Gastrocnemius medialis (tissue), 4 donors: ENCODE measurements at regions of chr1 and their contacts with region 1.

Region 1: GRCh38 chr1:197902454-197903195 is at the start of gene C1orf53:
- DNase-seq: peak; percentile 65 to 81
- ATAC-seq: peak; percentile 96
- H3K4me3 ChIP-seq: peak within 1 kb of the TSS; percentile 69 to 83 (median 72)
- H3K27ac ChIP-seq: peak within 1 kb of the TSS; percentile 79 to 92 (median 85)
- H3K4me1 ChIP-seq: peaks cover 9 to 10% of the 10 kb centered on the region in 2 donors
- H3K27me3 ChIP-seq: peaks cover 6 to 30% (median 11%) of the 10 kb centered on the region in 3 donors
- CTCF ChIP-seq: peak in 3 of 5 experiments; percentile 10 to 21 (median 21)
- POLR2A ChIP-seq: peak; percentile 25 to 28
- total RNA-seq, gene C1orf53: 2.1 to 4.8 (median 3.8) TPM in 3 of 4 donors, not detected in the other

Region 2: DNA sequence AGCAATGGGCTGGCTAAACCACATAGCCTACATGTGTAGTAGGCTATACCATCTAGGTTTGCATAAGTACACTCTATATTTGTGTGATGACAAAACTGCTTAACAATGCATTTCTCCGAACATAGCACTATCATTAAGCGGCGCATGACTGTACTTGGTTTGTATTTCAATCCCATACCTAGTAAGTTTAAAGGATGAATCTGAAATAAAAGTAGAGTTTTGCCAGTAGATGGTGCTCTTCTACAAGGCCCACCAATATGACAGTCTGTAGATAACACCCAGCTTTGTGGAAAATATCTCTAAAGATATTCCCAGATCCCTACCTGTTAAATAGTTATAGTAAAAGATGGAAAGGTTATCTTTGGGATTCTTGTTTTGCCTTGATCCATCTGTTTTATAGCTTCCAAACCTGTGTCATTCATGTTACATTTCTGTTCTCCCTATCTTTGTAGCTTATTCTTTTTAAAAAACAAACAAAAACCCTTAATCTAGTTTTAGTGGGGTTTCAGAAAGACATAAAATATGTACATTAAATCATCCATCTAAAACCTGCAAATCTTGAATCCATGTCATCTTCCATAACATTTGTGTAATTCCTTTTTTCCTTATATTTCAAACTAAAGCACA is 722.3 kb before region 1 on chr1:
- in situ Hi-C with region 1: loop called in 1 of 4 experiments (anchors 25 kb)
- intact Hi-C with region 1: no loop called
- DNase-seq: no peak
- ATAC-seq: peak; percentile 60 to 78
- H3K4me3 ChIP-seq: no peak overlapping the region
- H3K27ac ChIP-seq: no peak overlapping the region
- H3K4me1 ChIP-seq: peaks cover 0 to 2% of the 10 kb centered on the region in 2 donors
- H3K27me3 ChIP-seq: no peaks in the 10 kb centered on the region
- CTCF ChIP-seq: peak; percentile 15 to 68 (median 39)
- POLR2A ChIP-seq: no peak

Region 3: DNA sequence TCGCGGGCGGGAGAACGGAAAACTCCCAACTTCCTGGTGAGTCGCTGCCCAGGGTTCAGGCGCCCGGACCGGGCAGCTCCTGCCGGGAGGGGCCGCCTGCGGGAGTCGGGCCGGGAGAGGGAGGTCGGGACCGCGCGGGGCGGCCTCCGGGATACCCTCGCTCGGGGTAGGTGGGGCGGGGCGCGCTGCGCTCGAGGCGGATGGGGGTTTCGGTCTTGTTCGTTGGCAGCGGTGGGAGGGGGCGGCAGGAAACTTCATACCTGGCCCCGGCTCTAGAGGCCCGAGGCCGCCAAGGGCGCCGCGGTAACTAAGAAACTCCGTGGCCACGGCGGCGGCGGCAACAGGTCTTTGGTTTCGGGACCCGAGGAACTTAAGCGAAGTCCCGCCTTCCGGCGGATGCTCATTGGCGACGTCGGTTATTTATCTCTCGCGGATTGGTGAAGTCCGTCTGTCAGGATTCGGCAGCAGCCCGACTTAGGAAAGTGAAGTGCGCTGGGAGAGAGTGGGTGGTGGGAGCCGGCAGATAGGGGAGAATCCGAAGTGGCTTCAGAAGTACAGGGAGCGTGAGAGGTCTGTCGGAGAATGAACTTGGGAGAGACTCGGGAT is 254.7 kb after region 1 on chr1:
- in situ Hi-C with region 1: loop called in 1 of 4 experiments (anchors 25 kb)
- intact Hi-C with region 1: loop called (anchors 2 kb)
- DNase-seq: peak; percentile 91
- ATAC-seq: peak; percentile 76 to 82
- H3K4me3 ChIP-seq: peak overlapping the region; percentile 85 to 96 (median 94)
- H3K27ac ChIP-seq: peak overlapping the region; percentile 97 to 100 (median 98)
- H3K4me1 ChIP-seq: peaks cover 39 to 59% of the 10 kb centered on the region in 2 donors
- H3K27me3 ChIP-seq: no peaks in the 10 kb centered on the region
- CTCF ChIP-seq: no peak
- POLR2A ChIP-seq: peak; percentile 53 to 82